AG04450 (cell line): ENCODE measurements at regions of chr15 and their contacts with region 1.

Region 1: DNA sequence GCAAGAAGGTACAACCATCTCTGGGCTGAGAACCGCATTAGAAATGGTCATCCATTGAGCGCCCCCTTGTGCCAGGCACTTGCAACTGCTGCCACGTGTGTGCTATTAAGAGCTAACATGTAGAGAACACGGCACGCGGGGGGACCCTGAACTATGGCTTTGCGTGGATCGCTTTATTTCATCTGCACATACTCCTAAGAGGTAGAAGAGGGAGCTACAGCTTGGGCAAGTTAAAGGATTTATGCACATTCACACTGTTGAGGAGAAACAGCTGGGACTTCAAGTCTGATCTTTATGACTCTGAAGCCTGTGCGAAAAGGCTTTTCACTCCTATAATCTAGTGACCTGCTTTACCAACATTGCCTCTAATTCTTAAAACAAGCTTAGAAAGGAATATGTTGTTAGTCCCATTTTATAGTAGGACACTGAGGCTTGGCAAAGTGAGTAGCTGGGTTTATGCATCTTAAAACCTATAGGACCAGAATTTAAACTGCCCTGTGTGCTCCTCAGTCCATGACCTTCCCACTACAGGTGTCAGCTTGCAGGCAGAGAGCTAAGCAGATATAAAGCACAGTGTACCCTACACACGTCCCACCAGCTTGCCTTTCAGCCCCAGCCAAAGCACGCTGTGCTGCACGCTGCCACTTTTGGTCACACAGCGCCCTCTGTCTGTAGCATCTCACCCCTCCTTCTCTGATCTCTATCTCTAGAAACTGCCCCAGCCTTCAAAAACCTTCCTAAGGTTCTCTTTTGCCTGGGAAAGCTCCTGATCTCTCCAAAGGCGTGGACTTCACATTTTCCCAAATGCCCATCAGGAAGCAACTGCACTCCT is 57.8 kb downstream of the STARD5 start:
- DNase-seq: peak; percentile 61
- H3K4me3 ChIP-seq: no peak overlapping the region
- H3K27ac ChIP-seq: no peak overlapping the region
- H3K27me3 ChIP-seq: peaks cover 2% of the 10 kb centered on the region
- CTCF ChIP-seq: peak; percentile 95

Region 2: DNA sequence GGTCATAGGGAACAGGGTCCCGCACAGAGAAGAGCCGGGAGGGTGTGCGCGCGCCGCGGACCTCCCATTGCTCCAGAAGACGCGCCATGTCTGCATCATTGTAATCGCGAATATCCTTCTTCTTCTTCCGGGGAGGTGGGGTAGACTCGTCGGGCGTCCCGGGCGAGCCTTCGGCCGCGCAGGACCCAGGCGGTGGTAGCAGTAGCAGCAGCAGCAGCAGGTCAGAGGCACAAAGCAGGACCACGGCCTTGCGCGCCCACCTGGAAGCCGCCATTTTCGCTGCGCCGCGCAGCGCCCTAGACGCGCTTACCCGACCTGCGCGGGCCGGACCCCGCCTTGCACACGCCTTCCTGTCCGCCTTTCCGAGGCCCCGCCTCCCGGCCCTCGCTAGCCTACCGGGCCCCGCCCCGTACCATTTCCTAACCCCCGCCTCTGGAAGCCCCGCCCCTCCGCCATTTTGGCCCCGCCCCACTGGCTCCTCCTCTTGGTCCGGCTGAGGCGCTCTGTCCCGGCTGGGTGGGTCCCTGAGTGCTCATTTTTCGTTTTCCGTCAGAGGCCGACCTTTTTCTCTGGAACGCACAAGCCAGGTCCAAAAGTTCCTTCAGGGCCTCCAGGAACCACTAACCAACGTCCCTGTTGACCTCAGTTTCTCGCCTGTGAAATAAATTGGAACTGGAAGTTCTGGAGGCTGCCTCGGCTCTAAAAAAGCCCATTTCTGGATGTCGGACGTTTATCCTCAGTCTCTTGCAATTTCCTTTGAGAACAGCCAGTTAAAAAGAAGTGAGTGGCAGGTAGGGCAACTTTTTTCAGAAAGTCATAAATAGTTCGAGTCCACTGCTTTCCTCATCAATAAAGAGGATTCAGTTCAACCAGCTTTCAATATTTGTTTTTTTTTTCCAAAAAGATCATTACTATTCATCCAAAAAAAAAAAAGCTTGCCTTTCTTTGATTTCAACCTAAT is 276.4 kb before region 1 on chr15 and contains the start of gene MESD:
- CTCF ChIA-PET with region 1: interaction called, 13 read pairs
- POLR2A ChIA-PET with region 1: no interaction called
- DNase-seq: peak; percentile 81
- H3K4me3 ChIP-seq: peak within 1 kb of the TSS; percentile 91
- H3K27ac ChIP-seq: peak within 1 kb of the TSS; percentile 59
- H3K27me3 ChIP-seq: no peaks in the 10 kb centered on the region
- CTCF ChIP-seq: no peak
- polyA plus RNA-seq, gene MESD: 19.1 and 23.9 TPM in 2 replicates

Region 3: GRCh38 chr15:81126892-81127291 is 139.3 kb before region 1 on chr15:
- CTCF ChIA-PET with region 1: interaction called, 16 read pairs
- POLR2A ChIA-PET with region 1: no interaction called
- DNase-seq: no peak
- H3K4me3 ChIP-seq: no peak overlapping the region
- H3K27ac ChIP-seq: no peak overlapping the region
- H3K27me3 ChIP-seq: peaks cover 26% of the 10 kb centered on the region
- CTCF ChIP-seq: no peak

Region 4: DNA sequence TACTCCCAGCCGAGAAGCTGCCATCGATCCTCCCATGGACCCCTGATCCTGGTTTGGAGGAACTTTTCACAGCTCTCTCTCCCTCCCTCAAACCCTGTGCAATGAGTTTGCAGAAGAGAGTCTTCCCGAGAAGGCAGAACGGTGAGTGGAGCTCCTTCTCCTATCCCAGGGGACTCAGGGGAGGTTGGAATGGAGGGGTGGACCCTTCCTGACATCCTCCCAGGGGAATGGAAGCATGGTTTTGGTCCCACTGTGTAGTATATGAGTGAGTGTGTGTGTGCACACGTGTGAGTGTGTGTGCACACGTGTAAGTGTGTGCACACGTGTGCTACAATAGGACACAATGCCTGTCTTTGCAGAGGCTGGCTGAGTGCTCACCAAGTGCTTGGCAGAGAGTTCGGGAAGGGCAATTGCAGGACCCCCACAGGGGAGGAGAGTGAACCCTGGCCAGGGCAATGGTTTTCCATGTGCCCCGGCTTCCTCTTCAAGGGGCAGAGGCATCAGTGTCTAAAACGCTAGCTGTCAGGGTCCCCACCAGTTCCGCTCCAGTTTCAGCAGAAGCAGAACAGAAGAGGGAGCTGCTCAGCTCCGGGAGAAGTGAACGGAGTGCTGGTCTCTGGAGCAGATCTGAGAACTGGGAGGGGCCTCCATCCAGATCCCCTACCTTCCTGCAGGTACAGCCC is 83.3 kb before region 1 on chr15:
- CTCF ChIA-PET with region 1: interaction called, 38 read pairs
- POLR2A ChIA-PET with region 1: interaction called, 4 read pairs
- DNase-seq: no peak
- H3K4me3 ChIP-seq: peak overlapping the region; percentile 63
- H3K27ac ChIP-seq: peak overlapping the region; percentile 68
- H3K27me3 ChIP-seq: peaks cover 2% of the 10 kb centered on the region
- CTCF ChIP-seq: peak; percentile 42

Region 5: DNA sequence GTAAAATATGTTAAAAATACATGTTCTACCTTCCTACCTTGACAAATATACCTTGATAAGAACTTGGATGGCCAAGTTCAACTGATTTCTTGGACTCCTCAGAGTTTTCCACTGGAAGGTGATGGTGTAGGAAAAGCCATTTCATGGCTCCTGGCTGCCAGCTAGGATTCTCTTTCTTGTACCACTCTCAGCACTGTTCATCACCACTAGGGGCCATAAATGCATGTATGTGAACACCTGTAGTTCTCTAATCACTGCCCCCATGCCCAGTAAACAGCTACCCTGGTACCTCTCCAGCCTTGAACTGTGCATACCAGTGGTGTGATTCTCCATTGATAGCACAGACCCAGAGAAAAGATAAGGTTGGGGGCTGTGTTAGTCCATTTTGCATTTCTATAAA is 31.3 kb before region 1 on chr15:
- CTCF ChIA-PET with region 1: interaction called, 14 read pairs
- POLR2A ChIA-PET with region 1: no interaction called
- DNase-seq: no peak
- H3K4me3 ChIP-seq: no peak overlapping the region
- H3K27ac ChIP-seq: no peak overlapping the region
- H3K27me3 ChIP-seq: no peaks in the 10 kb centered on the region
- CTCF ChIP-seq: 0 out of 2 replicates have a peak, but pooled peaks have one; percentile 6

Region 6: DNA sequence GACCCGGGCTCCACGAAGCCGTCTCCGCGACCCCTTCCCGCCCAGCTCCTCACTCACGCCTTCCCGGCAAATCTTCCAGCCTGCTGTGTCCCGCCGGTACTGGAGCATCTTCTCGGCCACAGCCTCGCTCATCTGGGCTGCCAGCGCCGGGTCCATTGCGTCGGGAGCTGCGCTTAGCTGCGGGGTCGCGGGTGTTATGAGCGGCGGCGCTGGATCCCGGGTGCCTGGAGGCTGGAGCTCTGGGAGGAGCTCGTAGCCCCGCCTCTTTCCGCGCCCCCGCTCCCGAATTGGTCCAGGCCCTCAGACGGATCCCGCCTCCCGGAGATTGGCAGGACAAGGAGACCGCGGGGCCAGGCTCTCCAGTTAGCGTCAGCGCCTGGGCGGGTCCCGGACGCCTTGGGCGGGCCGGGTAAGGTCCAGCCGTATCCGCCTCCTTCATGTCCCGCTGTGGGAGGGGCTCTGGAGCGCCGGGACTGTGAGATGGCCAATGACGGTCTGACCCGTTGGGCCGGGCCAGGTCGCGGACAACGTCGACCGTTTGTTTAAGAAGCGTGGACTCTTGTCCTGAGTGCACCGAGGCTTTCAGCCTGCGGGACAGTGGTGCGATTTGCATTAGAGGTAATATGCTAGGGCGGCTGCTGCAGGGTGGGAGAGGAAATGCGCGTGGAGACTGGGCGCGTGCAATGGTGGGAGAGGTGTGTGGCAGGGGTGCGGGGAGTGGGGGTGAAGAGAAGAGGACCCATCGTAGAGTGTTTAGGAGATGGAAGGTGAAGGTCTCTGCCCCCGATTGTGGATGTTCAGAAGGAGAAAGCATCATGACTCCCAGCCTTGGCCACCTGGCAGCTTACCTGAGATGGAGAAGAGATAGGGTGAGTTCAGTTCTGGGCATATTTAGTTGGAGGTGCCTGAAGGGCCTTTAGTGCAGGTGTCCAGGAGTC is 58.1 kb after region 1 on chr15 and contains the start of gene STARD5:
- CTCF ChIA-PET with region 1: interaction called, 24 read pairs
- POLR2A ChIA-PET with region 1: interaction called, 3 read pairs
- DNase-seq: peak; percentile 88
- H3K4me3 ChIP-seq: peak within 1 kb of the TSS; percentile 95
- H3K27ac ChIP-seq: peak within 1 kb of the TSS; percentile 34
- H3K27me3 ChIP-seq: no peaks in the 10 kb centered on the region
- CTCF ChIP-seq: no peak
- polyA plus RNA-seq, gene STARD5: 19.0 and 20.5 TPM in 2 replicates

Region 7: DNA sequence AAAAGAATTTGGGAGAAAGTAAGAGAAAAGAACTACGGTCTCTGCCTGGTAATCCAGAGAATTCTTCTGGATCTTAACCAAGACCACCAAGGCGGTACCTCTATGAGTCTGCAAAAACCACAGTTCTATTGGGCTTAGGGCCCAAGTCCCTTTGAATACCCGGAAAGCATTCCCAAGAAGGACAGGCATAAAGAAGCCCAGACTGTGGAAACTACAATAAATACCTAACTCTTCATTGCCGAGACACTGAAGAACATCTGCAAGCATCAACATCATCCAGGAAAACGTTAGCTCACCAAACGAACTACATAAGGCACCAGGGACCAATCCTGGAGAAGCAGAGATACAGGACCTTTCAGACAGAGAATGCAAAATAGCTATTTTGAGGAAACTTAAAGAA is 270.2 kb after region 1 on chr15:
- CTCF ChIA-PET with region 1: no interaction called
- POLR2A ChIA-PET with region 1: no interaction called
- DNase-seq: no peak
- H3K4me3 ChIP-seq: no peak overlapping the region
- H3K27ac ChIP-seq: no peak overlapping the region
- H3K27me3 ChIP-seq: no peaks in the 10 kb centered on the region
- CTCF ChIP-seq: no peak